ENCODE measurements at regions of chr5 and their contacts with region 1.

Region 1: DNA sequence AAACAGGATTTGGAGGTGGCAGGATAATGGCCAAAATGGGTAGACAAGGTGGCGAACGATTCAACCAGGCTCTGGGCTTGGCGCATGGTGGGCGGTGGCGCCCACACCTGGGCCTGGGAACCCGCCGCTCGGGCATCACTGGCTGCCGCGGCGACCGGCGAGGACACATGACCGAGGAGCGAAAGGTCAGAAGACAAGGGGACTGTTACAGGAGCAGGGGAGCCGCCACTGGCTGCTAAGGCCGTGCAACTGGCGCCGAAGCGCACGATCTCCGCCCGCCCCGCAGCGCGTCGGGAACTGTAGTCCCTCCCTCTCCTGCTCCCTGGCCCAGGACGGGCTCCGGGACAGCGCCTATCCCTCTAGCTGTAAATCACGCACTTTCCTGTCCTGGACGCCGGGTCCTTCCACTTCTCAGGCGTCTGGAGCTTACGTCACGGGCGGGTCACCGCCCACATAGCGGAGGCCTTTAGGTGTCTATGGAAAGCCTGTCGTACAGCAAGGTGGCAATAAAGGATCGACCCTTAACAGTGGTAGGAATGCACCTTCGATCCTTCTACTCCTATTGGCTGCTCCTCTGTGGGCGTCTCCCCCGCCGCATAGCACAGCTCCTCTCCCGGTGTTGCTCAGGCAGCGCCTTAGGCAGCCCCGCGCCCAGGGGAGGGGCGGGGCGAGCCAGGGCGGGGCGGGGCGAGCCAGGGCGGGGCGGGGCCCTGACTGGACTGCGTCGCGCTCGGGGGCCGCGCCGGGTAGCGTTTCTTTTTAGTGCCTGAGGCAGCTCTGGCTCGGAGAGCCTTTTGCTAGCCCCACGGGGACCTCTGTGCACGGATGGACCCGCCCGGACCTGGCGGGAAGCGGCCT is at the start of gene ICE1:
- DNase-seq: peak; percentile 91
- H3K4me3 Mint-ChIP-seq: peak within 1 kb of the TSS; percentile 91
- H3K27ac Mint-ChIP-seq: peak within 1 kb of the TSS; percentile 90
- H3K4me1 Mint-ChIP-seq: peaks cover 16% of the 10 kb centered on the region
- H3K27me3 Mint-ChIP-seq: no peaks in the 10 kb centered on the region
- total RNA-seq, gene ICE1: 31.8 and 33.9 TPM in 2 replicates

Region 2: GRCh38 chr5:5141625-5142532 is 280.3 kb before region 1 on chr5:
- intact Hi-C with region 1: loop called (anchors 1 kb)
- DNase-seq: no peak
- H3K4me3 Mint-ChIP-seq: no peak overlapping the region
- H3K27ac Mint-ChIP-seq: no peak overlapping the region
- H3K4me1 Mint-ChIP-seq: no peaks in the 10 kb centered on the region
- H3K27me3 Mint-ChIP-seq: peaks cover 17% of the 10 kb centered on the region

Region 3: DNA sequence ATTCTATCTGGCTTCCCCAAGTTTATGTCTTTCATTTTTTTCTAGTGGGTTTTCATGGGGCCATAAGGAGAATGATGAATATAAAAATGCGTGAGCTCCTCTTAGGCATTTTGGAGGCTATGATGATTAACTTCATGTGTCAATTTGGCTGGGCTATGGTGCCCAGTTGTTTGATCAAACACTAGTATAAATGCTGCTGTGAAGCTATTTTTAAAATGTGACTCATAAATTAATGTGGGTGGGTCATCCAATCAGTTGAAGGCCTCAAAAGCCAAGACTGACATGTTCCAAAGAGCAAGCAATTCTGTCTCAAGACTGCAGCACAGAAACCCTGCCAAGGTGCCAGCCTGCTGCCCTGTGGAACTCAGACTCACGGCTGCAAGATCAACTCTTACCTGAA is 24.1 kb before region 1 on chr5:
- intact Hi-C with region 1: no loop called
- DNase-seq: no peak
- H3K4me3 Mint-ChIP-seq: no peak overlapping the region
- H3K27ac Mint-ChIP-seq: no peak overlapping the region
- H3K4me1 Mint-ChIP-seq: no peaks in the 10 kb centered on the region
- H3K27me3 Mint-ChIP-seq: no peaks in the 10 kb centered on the region

Region 4: DNA sequence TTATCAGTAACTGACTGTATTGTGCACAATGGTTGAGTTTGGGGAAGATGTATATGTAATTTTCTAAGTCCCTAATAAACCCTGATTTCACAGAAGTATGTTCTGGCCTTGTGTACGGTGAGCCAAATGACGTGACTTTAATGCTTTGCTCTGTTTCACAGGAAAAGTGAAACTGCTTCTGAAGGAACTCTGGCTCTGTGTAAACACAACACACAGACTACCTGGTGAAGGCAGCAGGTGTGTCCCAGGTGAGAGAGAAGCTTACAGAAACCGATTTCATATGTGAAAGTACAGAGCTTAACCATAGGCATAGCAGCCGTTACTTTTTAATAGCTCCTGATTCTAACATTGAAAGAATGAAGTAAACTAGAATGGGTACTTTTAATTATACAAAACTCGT is 32.2 kb after region 1 on chr5:
- intact Hi-C with region 1: no loop called
- DNase-seq: no peak
- H3K4me3 Mint-ChIP-seq: no peak overlapping the region
- H3K27ac Mint-ChIP-seq: no peak overlapping the region
- H3K4me1 Mint-ChIP-seq: peaks cover under 1% of the 10 kb centered on the region
- H3K27me3 Mint-ChIP-seq: no peaks in the 10 kb centered on the region

Region 5: DNA sequence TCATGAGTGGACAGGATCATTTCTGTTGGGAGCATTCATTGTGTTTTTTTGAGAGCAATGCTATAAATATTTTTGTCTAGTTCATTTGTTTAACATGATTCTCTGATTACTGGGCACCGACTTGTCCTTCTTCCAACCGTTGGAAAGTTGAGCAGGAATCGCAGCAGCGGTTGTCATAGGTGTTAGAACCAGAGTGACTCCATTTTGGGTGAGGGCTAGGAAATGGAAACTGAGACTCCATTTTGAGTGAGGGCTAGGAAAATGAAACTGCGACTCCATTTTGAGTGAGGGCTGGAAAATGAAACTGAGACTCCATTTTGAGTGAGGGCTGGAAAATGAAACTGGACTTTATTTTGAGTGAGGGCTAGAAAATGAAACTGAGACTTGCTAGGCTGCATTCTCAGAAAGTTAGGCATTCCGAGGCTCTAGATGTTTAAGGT is 100.9 kb after region 1 on chr5:
- intact Hi-C with region 1: loop called (anchors 1 kb)
- DNase-seq: peak; percentile 41
- H3K4me3 Mint-ChIP-seq: no peak overlapping the region
- H3K27ac Mint-ChIP-seq: peak overlapping the region; percentile 53
- H3K4me1 Mint-ChIP-seq: peaks cover 26% of the 10 kb centered on the region
- H3K27me3 Mint-ChIP-seq: no peaks in the 10 kb centered on the region

Region 6: GRCh38 chr5:6496207-6496584 is 1074.0 kb after region 1 on chr5:
- intact Hi-C with region 1: loop called (anchors 5 kb)
- DNase-seq: peak; percentile 47
- H3K4me3 Mint-ChIP-seq: no peak overlapping the region
- H3K27ac Mint-ChIP-seq: peak overlapping the region; percentile 74
- H3K4me1 Mint-ChIP-seq: peaks cover 50% of the 10 kb centered on the region
- H3K27me3 Mint-ChIP-seq: peaks cover 24% of the 10 kb centered on the region

Region 7: DNA sequence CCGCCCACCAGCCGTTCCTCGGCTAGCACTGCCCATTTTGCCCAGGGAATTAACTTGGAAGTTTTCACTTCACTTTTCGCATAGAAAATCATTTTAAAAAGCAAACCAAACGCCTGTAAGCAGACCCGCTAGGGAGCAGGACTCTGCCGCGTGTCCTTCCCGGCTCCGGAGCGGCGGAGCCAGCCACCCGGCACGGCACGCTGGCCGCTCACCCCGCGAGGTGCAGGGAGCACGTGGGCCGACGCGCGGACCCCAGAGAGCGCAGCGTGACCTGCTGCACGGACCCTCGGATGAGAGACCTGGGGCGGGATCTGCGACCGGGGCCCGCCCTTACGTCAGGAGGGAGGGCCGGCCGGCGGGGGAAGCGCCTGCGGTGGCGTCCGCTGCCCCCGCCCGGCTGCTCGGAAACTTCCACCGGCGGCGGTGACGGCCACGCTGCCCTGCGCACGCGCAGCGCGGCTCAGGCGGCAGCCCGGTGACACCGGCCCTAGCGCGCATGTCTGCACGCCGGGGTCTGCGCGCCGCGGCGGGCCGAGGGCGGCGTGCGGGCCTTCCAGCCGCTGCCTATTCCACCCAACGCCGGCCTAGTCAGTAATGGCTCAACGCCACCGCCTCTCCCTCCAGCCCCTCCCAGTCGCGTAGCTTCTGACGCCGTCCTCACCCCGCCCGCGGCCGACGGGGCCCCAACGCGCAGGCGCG is 1290.5 kb after region 1 on chr5:
- intact Hi-C with region 1: loop called (anchors 1 kb)
- DNase-seq: peak; percentile 97
- H3K4me3 Mint-ChIP-seq: peak overlapping the region; percentile 86
- H3K27ac Mint-ChIP-seq: peak overlapping the region; percentile 93
- H3K4me1 Mint-ChIP-seq: peaks cover 32% of the 10 kb centered on the region
- H3K27me3 Mint-ChIP-seq: no peaks in the 10 kb centered on the region

Measured in activated T-helper 2 cell treated with anti-CD3 and anti-CD28 coated beads, Interferon-gamma antibody, Interleukin-2, Interleukin-4, amounts not matched to agents 10 μg/mL and 5 μg/mL and 100 μg/mL, durations not matched to agents 14 hours and 24 hours and 36 hours (primary cell).